ENCODE measurements at regions of chr18 and their contacts with region 1.

Region 1: GRCh38 chr18:24414349-24415003 is 12.0 kb upstream of the IMPACT start:
- DNase-seq: no peak
- H3K4me3 ChIP-seq: no peak overlapping the region
- H3K27ac ChIP-seq: no peak overlapping the region
- H3K4me1 ChIP-seq: no peaks in the 10 kb centered on the region
- H3K27me3 ChIP-seq: no peaks in the 10 kb centered on the region
- CTCF ChIP-seq: no peak

Region 2: GRCh38 chr18:23422672-23423418 is 991.6 kb before region 1 on chr18:
- CTCF ChIA-PET with region 1: no interaction called
- POLR2A ChIA-PET with region 1: no interaction called
- intact Hi-C with region 1: no loop called
- DNase-seq: peak; percentile 88 to 99
- H3K4me3 ChIP-seq: peak overlapping the region; percentile 26; the same call in 1 of the 2 replicates
- H3K27ac ChIP-seq: peak overlapping the region; percentile 68
- H3K4me1 ChIP-seq: peaks cover 43% of the 10 kb centered on the region
- H3K27me3 ChIP-seq: no peaks in the 10 kb centered on the region
- CTCF ChIP-seq: no peak

Region 3: DNA sequence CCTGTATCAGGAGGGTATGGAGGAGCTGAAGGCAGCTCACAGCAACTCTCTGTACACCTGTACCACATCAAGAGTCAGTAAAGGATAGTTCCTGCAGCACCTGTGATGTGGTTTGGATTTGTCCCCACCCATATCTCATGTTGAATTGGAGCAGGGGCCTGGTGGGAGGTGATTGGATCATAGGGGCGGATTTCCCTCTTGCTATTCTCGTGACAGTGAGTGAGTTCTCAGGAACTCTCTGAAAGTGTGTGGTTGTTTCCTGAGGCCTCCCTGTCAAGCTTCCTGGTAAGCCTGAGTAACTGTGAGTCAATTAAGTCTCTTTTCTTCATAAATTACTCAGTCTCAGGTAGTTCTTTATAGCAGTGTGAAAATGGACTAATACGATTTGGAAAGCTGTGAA is 45.7 kb before region 1 on chr18:
- CTCF ChIA-PET with region 1: interaction called, 13 read pairs
- POLR2A ChIA-PET with region 1: no interaction called
- intact Hi-C with region 1: no loop called
- DNase-seq: no peak
- H3K4me3 ChIP-seq: no peak overlapping the region
- H3K27ac ChIP-seq: no peak overlapping the region
- H3K4me1 ChIP-seq: no peaks in the 10 kb centered on the region
- H3K27me3 ChIP-seq: no peaks in the 10 kb centered on the region
- CTCF ChIP-seq: no peak

Region 4: DNA sequence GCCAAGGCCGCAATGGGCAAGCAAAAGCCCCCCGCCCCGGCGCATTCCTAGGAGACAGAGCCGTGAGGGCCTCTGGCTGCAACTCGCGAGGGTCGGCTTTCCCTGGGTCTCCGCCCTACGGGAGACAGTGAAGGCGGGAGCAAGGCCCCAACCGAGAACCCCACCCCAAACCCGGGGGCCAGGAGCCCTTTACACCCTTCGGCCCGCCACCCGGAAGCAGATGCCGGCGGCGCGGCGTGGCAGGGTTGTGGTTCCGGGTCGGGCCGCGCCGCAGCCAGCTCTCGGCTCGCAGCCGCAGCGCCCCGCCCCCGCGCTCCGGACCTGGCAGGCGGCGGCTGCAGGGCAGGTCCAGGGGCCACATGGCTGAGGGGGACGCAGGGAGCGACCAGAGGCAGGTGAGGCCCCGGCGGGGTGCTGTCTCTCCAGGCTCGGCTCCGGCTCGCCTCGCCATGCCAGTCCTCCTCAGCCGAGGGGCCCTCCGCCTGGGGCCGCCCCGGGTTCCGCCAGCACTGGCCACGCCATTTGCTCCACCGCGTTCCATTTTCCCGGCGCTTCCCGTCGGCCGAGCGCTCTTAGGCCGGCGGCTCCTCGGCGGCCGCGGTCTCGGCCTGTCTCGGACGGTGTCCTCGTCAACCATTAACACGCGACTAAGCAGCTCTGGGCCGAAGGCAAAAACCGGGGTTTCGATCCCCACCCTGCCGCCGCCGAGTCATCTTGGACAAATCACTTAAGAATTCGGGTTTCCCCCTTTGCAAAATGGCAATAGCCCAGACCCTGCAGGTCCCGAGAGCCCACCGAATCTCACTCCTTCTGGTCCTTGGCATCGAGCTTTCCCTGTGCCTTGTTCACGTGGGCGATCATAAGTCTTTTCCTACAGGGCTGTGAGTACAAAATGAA is 12.2 kb after region 1 on chr18 and contains the start of gene IMPACT:
- CTCF ChIA-PET with region 1: no interaction called
- POLR2A ChIA-PET with region 1: no interaction called
- intact Hi-C with region 1: no loop called
- DNase-seq: peak; percentile 52 to 77
- H3K4me3 ChIP-seq: peak within 1 kb of the TSS; percentile 84
- H3K27ac ChIP-seq: peak within 1 kb of the TSS; percentile 77
- H3K4me1 ChIP-seq: peaks cover 10% of the 10 kb centered on the region
- H3K27me3 ChIP-seq: no peaks in the 10 kb centered on the region
- CTCF ChIP-seq: no peak
- total RNA-seq, gene IMPACT: 29.0 and 32.9 TPM in 2 replicates

Region 5: GRCh38 chr18:24485681-24486080 is 71.2 kb after region 1 on chr18:
- CTCF ChIA-PET with region 1: no interaction called
- POLR2A ChIA-PET with region 1: no interaction called
- intact Hi-C with region 1: no loop called
- DNase-seq: no peak
- H3K4me3 ChIP-seq: no peak overlapping the region
- H3K27ac ChIP-seq: no peak overlapping the region
- H3K4me1 ChIP-seq: no peaks in the 10 kb centered on the region
- H3K27me3 ChIP-seq: no peaks in the 10 kb centered on the region
- CTCF ChIP-seq: no peak

Region 6: GRCh38 chr18:24584813-24585212 is 170.3 kb after region 1 on chr18:
- CTCF ChIA-PET with region 1: no interaction called
- POLR2A ChIA-PET with region 1: no interaction called
- intact Hi-C with region 1: no loop called
- DNase-seq: no peak
- H3K4me3 ChIP-seq: no peak overlapping the region
- H3K27ac ChIP-seq: no peak overlapping the region
- H3K4me1 ChIP-seq: no peaks in the 10 kb centered on the region
- H3K27me3 ChIP-seq: peaks cover 45% of the 10 kb centered on the region
- CTCF ChIP-seq: no peak